ENCODE measurements at regions of chr17 and their contacts with region 1.

Region 1: DNA sequence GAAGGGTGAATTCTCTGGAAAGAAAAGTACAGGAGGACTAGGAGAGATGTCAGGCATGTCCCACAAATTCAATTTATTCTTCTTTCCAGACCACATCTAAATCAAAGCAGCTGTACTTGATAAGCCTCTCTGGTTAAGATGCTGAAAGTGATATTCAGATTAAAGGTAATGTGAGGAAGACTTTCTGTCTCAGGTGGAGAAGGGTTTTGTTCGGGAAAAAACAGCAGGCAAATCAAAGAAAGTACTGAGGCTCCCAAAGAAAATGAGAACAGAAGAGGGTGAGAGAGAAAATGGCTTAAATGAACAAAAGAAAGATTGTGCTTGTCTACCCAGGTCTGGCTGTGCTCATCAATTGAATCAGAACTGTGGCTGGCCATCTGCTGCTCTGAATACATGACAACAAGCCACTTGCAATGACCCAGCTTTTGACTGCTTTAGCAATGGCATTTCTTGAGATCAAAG is 55.6 kb downstream of the MMD start:
- DNase-seq: no peak
- ATAC-seq: no peak
- H3K4me3 ChIP-seq: no peak overlapping the region
- H3K27ac ChIP-seq: no peak overlapping the region
- H3K4me1 ChIP-seq: no peaks in the 10 kb centered on the region
- H3K27me3 ChIP-seq: no peaks in the 10 kb centered on the region

Region 2: DNA sequence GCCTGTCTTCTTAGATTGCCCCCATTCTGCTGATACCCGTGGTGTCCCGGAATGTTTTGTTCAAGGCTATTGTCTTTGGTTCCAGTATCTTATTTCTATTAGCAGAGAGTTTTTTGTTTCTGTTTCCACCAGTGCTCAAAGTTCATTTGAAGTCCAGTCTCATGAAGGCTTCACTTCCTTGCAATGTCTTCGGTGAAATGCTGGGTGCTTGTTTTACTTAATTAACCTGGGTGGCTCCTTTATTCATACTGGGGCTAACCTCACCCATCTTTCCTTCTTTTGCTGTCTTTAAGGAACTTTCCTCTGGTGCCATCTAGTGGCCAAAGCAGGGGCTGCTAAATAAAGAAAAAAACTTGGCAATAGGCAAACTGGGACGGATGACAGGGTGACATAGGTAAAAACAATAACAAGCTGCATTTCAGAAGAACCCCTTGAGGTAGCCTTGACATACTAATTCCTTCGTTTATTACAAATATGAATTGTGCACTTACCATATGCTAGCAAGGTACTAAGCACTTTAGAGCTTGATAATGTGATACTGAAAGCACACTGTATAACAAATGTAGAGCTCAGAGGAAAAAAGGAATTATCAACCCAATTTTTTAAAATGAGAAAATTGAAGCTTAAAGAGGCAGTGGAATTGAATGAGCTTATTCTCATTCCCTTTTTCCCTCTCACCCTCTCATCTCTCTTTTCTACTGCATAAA is 148.0 kb after region 1 on chr17:
- intact Hi-C with region 1: loop called in 1 of 2 experiments (anchors 10 kb)
- DNase-seq: peak; percentile 59 to 81
- ATAC-seq: peak; percentile 78
- H3K4me3 ChIP-seq: no peak overlapping the region
- H3K27ac ChIP-seq: no peak overlapping the region
- H3K4me1 ChIP-seq: no peaks in the 10 kb centered on the region
- H3K27me3 ChIP-seq: peaks cover 0 to 2% of the 10 kb centered on the region in 2 donors